ENCODE measurements at regions of chrX and their contacts with region 1.

Region 1: GRCh38 chrX:13078739-13079444 is 34.5 kb upstream of the FAM9C start:
- DNase-seq: no peak
- ATAC-seq: no peak
- H3K4me3 Mint-ChIP-seq: peak overlapping the region; percentile 29
- H3K27ac Mint-ChIP-seq: peak overlapping the region; percentile 75
- H3K4me1 Mint-ChIP-seq: peaks cover 87% of the 10 kb centered on the region
- H3K27me3 Mint-ChIP-seq: no peaks in the 10 kb centered on the region

Region 2: GRCh38 chrX:12974796-12975669 is 103.9 kb before region 1 on chrX and contains the start of gene TMSB4X:
- CTCF ChIA-PET with region 1: interaction called, 10 read pairs
- POLR2A ChIA-PET with region 1: interaction called, 5 read pairs
- intact Hi-C with region 1: no loop called
- DNase-seq: peak; percentile 91
- ATAC-seq: peak; percentile 52
- H3K4me3 Mint-ChIP-seq: peak within 1 kb of the TSS; percentile 90
- H3K27ac Mint-ChIP-seq: peak within 1 kb of the TSS; percentile 96
- H3K4me1 Mint-ChIP-seq: peaks cover 24% of the 10 kb centered on the region
- H3K27me3 Mint-ChIP-seq: no peaks in the 10 kb centered on the region
- total RNA-seq, gene TMSB4X: 3,666 to 4,468 TPM

Region 3: DNA sequence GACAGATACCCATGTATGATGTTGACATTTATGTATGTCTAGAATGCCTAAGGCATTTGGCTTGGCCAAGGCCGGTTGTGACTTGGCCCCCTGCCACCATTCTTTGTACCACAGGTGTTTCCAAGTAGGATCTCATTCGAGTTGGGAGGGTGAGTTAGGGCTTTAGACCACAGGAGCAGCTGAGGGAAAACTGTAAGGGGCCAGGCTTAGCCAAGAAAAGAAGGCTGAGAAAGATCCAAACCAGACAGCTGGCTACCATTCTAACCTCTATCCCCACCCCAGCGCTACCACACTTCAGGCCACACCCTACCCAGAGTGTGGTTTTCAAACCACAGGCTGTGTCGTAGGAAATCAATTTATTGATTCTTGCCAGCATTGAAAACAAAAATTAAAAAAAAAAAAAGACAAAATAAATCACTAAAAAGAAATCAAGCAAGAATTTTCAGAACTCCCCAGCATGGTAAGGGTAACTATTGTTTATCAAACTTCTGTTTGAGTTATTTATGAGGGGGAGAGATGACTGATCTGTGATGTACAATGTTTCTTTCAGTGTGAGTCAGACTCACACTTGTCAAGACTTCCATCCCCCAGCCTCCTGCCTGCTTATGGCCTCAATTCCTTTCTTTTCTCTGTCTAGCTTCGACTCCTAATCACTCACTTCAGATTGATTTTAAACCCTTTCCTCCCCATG is 94.1 kb before region 1 on chrX:
- CTCF ChIA-PET with region 1: interaction called, 10 read pairs
- POLR2A ChIA-PET with region 1: interaction called, 5 read pairs
- intact Hi-C with region 1: loop called in 1 of 2 experiments (anchors 1 kb)
- DNase-seq: peak; percentile 65
- ATAC-seq: peak; percentile 84
- H3K4me3 Mint-ChIP-seq: peak overlapping the region; percentile 28
- H3K27ac Mint-ChIP-seq: peak overlapping the region; percentile 89
- H3K4me1 Mint-ChIP-seq: peaks cover 70% of the 10 kb centered on the region
- H3K27me3 Mint-ChIP-seq: no peaks in the 10 kb centered on the region

Region 4: GRCh38 chrX:13051529-13052172 is 27.2 kb before region 1 on chrX:
- CTCF ChIA-PET with region 1: interaction called, 4 read pairs
- POLR2A ChIA-PET with region 1: interaction called, 12 read pairs
- intact Hi-C with region 1: loop called (anchors 1 to 2 kb)
- DNase-seq: no peak
- ATAC-seq: peak; percentile 81
- H3K4me3 Mint-ChIP-seq: no peak overlapping the region
- H3K27ac Mint-ChIP-seq: peak overlapping the region; percentile 90
- H3K4me1 Mint-ChIP-seq: peaks cover 83% of the 10 kb centered on the region
- H3K27me3 Mint-ChIP-seq: no peaks in the 10 kb centered on the region

Region 5: DNA sequence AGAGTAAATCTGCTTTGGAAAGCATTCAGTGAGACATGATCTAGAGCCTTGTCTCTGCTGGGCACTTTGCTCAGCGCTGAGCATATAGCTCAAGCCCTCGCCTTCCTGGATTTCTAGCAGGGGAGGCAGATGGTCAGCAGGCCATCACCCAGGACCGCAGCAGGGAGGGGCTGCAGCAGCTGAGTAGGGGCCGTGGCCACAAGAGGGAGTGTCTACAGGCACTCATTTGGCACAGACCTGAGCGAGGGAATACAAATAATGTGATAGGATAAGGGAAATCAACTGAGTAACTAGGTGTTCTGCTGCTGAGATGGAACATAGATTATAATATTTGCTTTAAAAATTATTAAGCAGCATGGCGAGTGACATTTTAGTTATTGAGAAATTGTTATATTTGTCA is 685.9 kb after region 1 on chrX:
- CTCF ChIA-PET with region 1: no interaction called
- POLR2A ChIA-PET with region 1: no interaction called
- intact Hi-C with region 1: no loop called
- DNase-seq: no peak
- ATAC-seq: no peak
- H3K4me3 Mint-ChIP-seq: no peak overlapping the region
- H3K27ac Mint-ChIP-seq: no peak overlapping the region
- H3K4me1 Mint-ChIP-seq: peaks cover 5% of the 10 kb centered on the region
- H3K27me3 Mint-ChIP-seq: no peaks in the 10 kb centered on the region